ENCODE measurements at regions of chr19 and their contacts with region 1.

Region 1: DNA sequence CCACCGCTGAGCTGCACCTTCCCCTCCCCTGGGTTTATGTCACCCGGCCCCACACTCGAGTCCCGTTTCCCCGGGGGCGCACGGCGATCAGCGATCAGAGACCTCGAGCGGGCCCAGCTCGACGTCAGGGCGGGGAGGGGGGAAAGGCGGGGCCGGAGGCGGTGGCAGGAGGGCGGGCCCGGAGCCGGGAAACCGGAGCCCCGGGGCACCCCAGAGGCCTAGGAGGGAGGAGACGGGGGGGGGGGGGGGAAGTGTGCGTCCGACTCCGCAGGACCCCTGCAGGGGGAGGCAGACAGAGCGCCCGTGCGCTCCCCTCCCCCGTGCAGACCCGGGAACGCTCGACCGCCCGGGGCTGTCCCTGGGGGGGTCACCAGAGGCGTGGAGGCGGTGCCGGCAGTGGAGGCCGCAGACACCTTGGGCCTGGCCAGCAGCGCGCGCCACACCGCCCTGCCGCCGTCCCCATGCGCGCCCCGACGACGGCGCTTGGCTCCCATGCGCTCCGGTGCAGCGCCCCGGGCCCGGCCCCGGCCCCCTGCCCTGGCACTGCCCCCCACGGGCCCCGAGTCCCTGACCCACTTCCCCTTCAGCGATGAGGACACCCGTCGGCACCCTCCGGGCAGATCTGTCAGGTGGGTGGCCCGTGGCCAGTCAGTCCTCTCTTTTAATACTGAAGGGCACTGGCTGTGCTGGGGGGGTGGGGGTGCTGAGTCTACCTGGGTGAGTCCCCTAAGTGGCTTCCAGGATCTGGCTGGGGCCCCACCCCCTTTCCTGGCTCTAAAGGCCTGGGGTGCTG is 11.8 kb downstream of the PDE4A start:
- DNase-seq: peak in 1 of 2 experiments; percentile 60
- H3K4me3 ChIP-seq: peak overlapping the region; percentile 43; the same call in 1 of the 2 replicates
- H3K27ac ChIP-seq: no peak overlapping the region
- H3K4me1 ChIP-seq: 0 out of 2 replicates have a peak, but pooled peaks cover 9% of the 10 kb centered on the region
- H3K27me3 ChIP-seq: peaks cover 36% of the 10 kb centered on the region
- CTCF ChIP-seq: no peak

Region 2: DNA sequence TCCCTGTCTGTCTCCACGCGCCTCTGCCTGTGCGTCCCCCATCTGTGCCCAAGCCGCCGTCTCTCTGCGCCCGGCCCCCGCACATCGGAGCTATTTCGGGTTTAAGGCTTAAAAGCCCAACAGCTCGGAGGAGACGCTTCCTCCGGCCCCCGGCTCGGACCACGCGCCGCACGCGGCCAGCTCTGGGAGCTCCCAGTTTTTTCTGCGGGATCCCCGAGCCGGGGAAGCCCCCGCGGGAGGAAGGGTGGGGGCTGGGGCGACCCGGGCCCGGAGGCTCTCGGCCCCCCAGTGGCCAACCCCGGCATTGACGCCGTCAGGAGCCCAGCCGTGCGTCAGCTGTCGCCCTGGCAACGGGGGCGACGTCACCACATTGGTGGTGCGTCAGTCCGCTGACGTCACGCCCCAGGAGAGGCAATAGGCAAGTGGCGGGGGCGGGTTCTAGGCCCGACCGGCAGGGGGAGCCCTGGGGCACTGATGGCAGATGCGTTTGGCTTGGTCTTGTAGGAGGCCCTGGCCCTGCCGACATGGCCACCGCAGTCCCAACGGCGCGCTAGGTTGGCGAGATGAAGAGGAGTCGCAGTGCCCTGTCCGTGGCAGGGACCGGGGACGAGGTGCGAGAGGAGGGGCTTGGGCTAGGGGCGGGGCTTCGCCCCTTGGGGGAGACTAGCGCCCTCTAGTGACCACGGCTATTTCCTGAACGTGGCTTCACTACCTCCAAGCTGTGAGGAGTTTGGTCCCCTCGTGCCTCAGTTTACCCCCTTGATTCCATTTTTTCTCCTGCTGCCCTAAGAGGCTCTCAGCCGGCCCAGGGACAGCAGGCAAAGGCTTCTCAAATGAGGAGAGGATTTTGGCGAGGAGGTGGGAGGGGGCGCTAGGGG is 15.5 kb before region 1 on chr19:
- CTCF ChIA-PET with region 1: interaction called, 11 read pairs
- POLR2A ChIA-PET with region 1: interaction called, 4 read pairs
- intact Hi-C with region 1: no loop called
- DNase-seq: peak; percentile 80 to 93
- H3K4me3 ChIP-seq: peak overlapping the region; percentile 66
- H3K27ac ChIP-seq: no peak overlapping the region
- H3K4me1 ChIP-seq: peaks cover 13% of the 10 kb centered on the region; the same call in 1 of the 2 replicates
- H3K27me3 ChIP-seq: peaks cover 45% of the 10 kb centered on the region
- CTCF ChIP-seq: peak; percentile 97

Region 3: GRCh38 chr19:10450853-10451609 is 18.9 kb after region 1 on chr19:
- CTCF ChIA-PET with region 1: interaction called, 10 read pairs
- POLR2A ChIA-PET with region 1: no interaction called
- intact Hi-C with region 1: no loop called
- DNase-seq: no peak
- H3K4me3 ChIP-seq: no peak overlapping the region
- H3K27ac ChIP-seq: no peak overlapping the region
- H3K4me1 ChIP-seq: no peaks in the 10 kb centered on the region
- H3K27me3 ChIP-seq: no peaks in the 10 kb centered on the region
- CTCF ChIP-seq: no peak

Region 4: DNA sequence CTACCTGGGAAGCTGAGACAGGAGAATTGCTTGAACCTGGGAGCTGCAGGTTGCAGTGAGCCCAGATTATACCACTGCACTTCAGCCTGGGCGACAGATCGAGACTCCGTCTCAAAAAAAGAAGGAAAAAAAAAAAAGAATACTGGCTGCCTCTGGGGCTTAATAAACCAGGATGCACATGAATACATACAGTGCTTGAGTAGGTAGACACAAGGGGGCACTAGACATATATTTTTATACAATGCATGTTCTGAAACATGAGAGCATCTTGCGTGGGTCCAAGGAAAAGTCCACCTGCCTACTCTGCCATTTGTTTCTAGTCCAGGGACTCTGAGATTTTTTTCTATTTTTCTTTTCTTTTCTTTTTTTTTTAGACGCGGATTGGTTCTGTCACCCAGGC is 39.8 kb after region 1 on chr19:
- CTCF ChIA-PET with region 1: interaction called, 12 read pairs
- POLR2A ChIA-PET with region 1: no interaction called
- intact Hi-C with region 1: no loop called
- DNase-seq: no peak
- H3K4me3 ChIP-seq: no peak overlapping the region
- H3K27ac ChIP-seq: no peak overlapping the region
- H3K4me1 ChIP-seq: no peaks in the 10 kb centered on the region
- H3K27me3 ChIP-seq: no peaks in the 10 kb centered on the region
- CTCF ChIP-seq: peak; percentile 65

Region 5: GRCh38 chr19:10551698-10552301 is 119.7 kb after region 1 on chr19:
- CTCF ChIA-PET with region 1: no interaction called
- POLR2A ChIA-PET with region 1: interaction called, 14 read pairs
- intact Hi-C with region 1: no loop called
- DNase-seq: peak; percentile 45 to 72
- H3K4me3 ChIP-seq: no peak overlapping the region
- H3K27ac ChIP-seq: no peak overlapping the region
- H3K4me1 ChIP-seq: no peaks in the 10 kb centered on the region
- H3K27me3 ChIP-seq: no peaks in the 10 kb centered on the region
- CTCF ChIP-seq: peak; percentile 46; the same call in 1 of the 2 replicates

Measured in PC-9 (cell line).